AG04450 (cell line): ENCODE measurements at regions of chr2 and their contacts with region 1.

Region 1: DNA sequence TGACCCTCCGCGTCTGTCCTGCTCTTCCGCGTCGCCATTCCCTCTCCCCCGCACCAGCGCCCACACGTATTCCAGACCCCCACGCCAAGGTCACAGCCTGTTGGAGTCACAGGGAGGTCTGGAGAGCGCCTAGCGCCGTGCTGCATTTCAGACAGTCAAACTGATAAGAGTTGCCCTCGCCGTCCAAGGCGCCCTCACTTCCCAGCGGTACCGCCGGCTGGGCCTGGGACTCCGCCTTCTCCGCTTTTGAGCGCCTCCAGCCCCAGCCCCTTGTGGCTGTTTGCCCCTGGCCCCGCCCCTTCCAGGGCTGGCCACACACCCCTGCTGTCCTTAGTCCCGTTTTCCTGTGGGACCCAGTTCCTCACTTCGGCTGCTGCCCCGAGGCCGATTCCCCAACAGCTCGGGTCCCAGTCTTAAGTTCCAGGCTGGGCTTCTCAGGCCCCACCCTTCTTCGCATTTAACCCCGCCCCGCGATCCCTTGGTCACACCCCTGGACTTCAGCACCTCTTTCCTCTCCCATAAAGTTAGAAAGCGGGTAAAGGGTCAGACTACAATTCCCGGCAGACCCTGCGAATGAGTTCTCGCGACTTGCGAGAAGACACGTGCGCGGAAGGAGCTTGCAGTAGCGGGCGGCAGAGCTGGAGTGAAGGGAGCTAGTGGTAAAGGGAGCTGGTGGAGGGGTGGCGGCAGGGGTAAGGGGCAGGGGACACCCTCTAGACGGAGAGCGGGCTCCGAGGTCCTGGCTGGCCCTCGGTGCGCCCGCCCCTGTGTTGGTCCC is at the start of gene GMPPA:
- DNase-seq: peak; percentile 97
- H3K4me3 ChIP-seq: peak within 1 kb of the TSS; percentile 80
- H3K27ac ChIP-seq: peak within 1 kb of the TSS; percentile 86
- H3K27me3 ChIP-seq: peaks cover 3% of the 10 kb centered on the region
- CTCF ChIP-seq: 0 out of 2 replicates have a peak, but pooled peaks have one; percentile 7
- polyA plus RNA-seq, gene GMPPA: 90.1 and 97.7 TPM in 2 replicates

Region 2: GRCh38 chr2:219402665-219403515 is 95.6 kb before region 1 on chr2:
- CTCF ChIA-PET with region 1: interaction called, 25 read pairs
- POLR2A ChIA-PET with region 1: interaction called, 5 read pairs
- DNase-seq: peak; percentile 78
- H3K4me3 ChIP-seq: no peak overlapping the region
- H3K27ac ChIP-seq: no peak overlapping the region
- H3K27me3 ChIP-seq: no peaks in the 10 kb centered on the region
- CTCF ChIP-seq: peak; percentile 96

Region 3: GRCh38 chr2:219459460-219460311 is 38.8 kb before region 1 on chr2:
- CTCF ChIA-PET with region 1: interaction called, 18 read pairs
- POLR2A ChIA-PET with region 1: interaction called, 9 read pairs
- DNase-seq: no peak
- H3K4me3 ChIP-seq: no peak overlapping the region
- H3K27ac ChIP-seq: peak overlapping the region; percentile 70
- H3K27me3 ChIP-seq: no peaks in the 10 kb centered on the region
- CTCF ChIP-seq: peak; percentile 95

Region 4: DNA sequence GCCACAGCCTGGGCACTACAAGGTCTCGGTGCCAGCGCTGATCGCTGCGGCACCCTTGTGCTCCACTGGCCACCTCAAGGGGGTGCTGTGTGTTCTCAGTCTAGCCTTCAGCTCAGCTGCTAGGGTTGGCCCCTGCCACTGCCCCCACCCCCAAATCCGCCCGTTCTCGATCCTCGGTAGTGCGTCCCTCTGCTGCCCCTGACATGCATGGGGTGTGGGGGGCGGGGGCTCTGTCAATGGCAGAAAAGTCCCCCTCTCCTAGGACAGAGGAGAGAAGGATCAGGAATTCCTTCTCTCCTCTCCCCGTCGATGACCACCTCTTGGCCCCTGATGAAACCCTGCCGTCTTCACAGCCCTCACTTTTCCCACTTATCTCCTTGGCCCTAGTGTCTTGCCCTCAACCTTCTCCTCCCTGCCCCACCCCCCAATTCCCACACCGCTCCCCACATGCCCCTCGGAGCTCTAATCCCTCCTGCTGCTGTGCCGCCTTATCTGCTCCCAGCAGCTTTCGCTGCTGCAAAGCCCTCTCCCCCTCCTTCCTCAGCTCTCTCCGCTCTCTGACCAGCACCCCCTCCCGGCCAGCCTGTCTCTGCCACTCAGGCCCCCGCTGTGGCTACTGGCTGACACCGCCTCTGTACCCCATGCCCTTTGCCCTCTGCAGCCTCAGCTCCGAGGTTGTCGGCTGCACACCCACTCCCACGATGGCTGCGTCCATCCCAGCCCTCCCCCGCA is 11.5 kb after region 1 on chr2:
- CTCF ChIA-PET with region 1: interaction called, 67 read pairs
- POLR2A ChIA-PET with region 1: interaction called, 18 read pairs
- DNase-seq: no peak
- H3K4me3 ChIP-seq: peak overlapping the region; percentile 37
- H3K27ac ChIP-seq: no peak overlapping the region
- H3K27me3 ChIP-seq: peaks cover 46% of the 10 kb centered on the region
- CTCF ChIP-seq: peak; percentile 79

Region 5: GRCh38 chr2:219530048-219530963 is 31.8 kb after region 1 on chr2:
- CTCF ChIA-PET with region 1: interaction called, 168 read pairs
- POLR2A ChIA-PET with region 1: interaction called, 4 read pairs
- DNase-seq: peak; percentile 59
- H3K4me3 ChIP-seq: peak overlapping the region; percentile 41
- H3K27ac ChIP-seq: no peak overlapping the region
- H3K27me3 ChIP-seq: peaks cover 45% of the 10 kb centered on the region
- CTCF ChIP-seq: peak; percentile 98

Region 6: DNA sequence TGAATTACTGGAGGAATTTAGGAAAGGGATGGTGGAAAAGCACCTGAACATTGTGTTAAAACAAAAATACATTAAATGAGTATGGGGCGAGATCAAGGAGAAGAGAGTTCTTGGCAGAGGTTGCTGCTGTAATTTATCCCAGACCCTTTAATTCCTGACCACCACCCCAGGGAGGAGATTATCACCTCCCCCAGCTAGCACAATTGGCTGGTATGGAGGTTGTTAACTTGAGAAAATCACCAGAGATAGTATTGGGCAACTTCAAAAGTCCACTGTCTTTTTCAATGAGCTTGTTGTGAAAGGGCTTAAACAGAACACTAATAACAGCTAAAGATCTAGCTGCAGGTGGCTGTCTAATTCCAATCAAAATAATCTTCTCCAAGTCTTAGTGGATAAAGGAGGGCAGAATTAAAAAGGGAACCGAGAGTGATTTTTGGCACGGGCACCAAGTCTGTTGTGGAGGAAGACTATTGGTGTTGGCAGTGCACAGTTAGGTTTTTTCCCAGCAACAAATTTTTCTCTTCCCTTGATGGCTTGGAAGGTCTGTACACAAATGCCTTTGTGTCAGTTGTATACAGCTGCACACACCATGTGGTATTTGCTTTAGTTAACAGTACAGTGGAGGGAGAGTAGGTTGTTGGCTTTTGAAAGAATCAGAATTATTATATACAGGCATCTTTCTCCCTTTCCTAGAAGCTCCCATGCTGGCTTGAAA is 418.4 kb after region 1 on chr2:
- CTCF ChIA-PET with region 1: no interaction called
- POLR2A ChIA-PET with region 1: no interaction called
- DNase-seq: no peak
- H3K4me3 ChIP-seq: no peak overlapping the region
- H3K27ac ChIP-seq: no peak overlapping the region
- H3K27me3 ChIP-seq: peaks cover 14% of the 10 kb centered on the region
- CTCF ChIP-seq: no peak